ENCODE measurements at regions of chr1 and their contacts with region 1.

Region 1: GRCh38 chr1:163528710-163529348 is 207.1 kb downstream of the NUF2 start:
- ATAC-seq: peak in 3 of 8 experiments; percentile 28 to 57 (median 46)
- H3K4me3 ChIP-seq: no peak overlapping the region
- H3K27ac ChIP-seq: no peak overlapping the region
- H3K4me1 ChIP-seq: peaks cover 1 to 10% of the 10 kb centered on the region in 2 donors

Region 2: DNA sequence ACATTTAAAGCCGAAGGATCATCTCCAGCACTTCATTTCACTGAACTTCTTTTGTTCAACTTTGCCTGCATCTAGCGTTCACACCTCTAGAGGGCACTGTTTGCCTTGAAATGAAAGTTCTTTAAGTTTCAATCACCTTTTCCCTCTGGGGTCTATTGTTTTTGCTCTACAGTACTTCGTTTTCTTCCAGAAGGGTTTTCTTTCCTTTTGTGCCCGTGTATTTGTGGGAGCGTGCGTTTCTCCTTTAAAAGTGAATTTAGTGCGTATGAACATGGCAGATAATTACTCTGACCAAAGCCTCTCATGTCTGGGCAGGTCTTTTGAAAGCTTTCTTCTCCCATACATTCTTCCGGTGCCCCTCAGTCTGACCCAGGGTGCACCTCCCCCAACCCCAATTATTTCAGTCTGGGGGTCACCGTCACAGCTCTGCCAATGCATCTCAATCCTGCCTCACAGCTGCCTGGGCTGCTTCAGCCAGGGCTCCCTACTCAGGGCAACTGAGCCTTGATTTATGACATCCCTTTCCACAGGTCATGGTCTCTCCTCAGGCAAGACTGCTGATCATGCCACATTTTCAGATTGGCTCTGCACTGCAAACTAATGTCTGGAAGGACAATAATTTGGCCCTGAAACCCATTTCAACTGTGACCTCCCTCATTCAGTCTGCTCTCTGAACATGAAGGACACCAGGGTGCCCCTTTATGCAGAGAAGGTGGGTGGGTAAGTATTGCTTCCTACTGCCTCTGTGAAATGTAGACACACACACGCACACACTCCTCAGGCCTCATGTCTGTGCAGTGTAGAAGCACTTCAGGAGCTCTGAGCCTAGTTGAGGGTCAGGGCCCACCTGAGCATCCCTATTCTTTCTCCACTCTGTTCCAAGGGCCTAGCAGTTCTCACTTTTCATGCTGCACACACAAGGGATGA is 118.5 kb before region 1 on chr1:
- in situ Hi-C with region 1: loop called in 1 of 9 experiments (anchors 10 kb)
- ATAC-seq: peak in 7 of 8 experiments; percentile 46 to 92 (median 84)
- H3K4me3 ChIP-seq: peak overlapping the region in 2 of 5 donors; percentile 7 to 9
- H3K27ac ChIP-seq: peak overlapping the region; percentile 3 to 11
- H3K4me1 ChIP-seq: peaks cover 20 to 25% of the 10 kb centered on the region in 2 donors